ENCODE measurements at regions of chr7 and their contacts with region 1.

Region 1: GRCh38 chr7:70829221-70830059 is 302.5 kb upstream of the GALNT17 start:
- DNase-seq: peak; percentile 81
- H3K4me3 ChIP-seq: no peak overlapping the region; a peak in 1 of 4 replicates
- H3K27ac ChIP-seq: no peak overlapping the region
- H3K4me1 ChIP-seq: no peaks in the 10 kb centered on the region; a peak in 1 of 4 replicates
- H3K27me3 ChIP-seq: no peaks in the 10 kb centered on the region
- CTCF ChIP-seq: peak; percentile 88
- EP300 ChIP-seq: no peak
- RAD21 ChIP-seq: peak; percentile 83

Region 2: GRCh38 chr7:70654979-70655378 is 174.5 kb before region 1 on chr7:
- CTCF ChIA-PET with region 1: no interaction called
- POLR2A ChIA-PET with region 1: no interaction called
- DNase-seq: no peak
- H3K4me3 ChIP-seq: no peak overlapping the region
- H3K27ac ChIP-seq: no peak overlapping the region
- H3K4me1 ChIP-seq: peaks cover 0 to 6% of the 10 kb centered on the region in 2 experiments; a peak in 1 of 4 replicates
- H3K27me3 ChIP-seq: no peaks in the 10 kb centered on the region
- CTCF ChIP-seq: no peak
- EP300 ChIP-seq: no peak
- RAD21 ChIP-seq: no peak

Region 3: DNA sequence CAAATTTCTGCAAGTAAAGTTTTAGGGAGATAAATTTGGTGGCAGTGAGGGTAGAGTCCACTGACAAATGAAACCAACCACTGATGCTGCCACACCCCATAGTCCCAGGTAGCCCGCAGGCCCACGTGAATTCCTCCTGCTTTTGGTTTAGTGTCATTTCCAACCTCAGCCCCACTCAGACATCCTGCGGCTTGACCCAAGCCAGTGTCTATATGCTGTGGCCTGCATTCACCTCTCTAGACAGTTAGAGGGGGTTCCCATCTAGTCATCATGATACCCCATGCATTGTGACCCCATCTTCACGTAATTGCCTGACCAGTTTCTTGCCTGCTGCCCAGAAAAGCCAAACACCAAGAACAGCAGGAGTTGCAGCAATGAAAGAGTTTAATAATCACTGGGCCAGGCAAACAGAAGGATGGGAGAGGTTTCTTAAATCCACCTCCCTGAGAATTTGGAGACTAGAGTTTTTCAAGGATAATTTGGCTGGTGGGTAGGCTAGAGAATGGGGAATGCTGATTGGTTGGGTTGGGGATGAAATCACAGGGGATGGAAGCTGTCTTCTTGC is 29.5 kb before region 1 on chr7:
- CTCF ChIA-PET with region 1: interaction called, 12 read pairs
- POLR2A ChIA-PET with region 1: no interaction called
- DNase-seq: peak; percentile 2
- H3K4me3 ChIP-seq: no peak overlapping the region
- H3K27ac ChIP-seq: no peak overlapping the region
- H3K4me1 ChIP-seq: peaks cover 0 to 14% of the 10 kb centered on the region in 2 experiments; a peak in 1 of 4 replicates
- H3K27me3 ChIP-seq: no peaks in the 10 kb centered on the region
- CTCF ChIP-seq: no peak
- EP300 ChIP-seq: no peak
- RAD21 ChIP-seq: no peak

Region 4: DNA sequence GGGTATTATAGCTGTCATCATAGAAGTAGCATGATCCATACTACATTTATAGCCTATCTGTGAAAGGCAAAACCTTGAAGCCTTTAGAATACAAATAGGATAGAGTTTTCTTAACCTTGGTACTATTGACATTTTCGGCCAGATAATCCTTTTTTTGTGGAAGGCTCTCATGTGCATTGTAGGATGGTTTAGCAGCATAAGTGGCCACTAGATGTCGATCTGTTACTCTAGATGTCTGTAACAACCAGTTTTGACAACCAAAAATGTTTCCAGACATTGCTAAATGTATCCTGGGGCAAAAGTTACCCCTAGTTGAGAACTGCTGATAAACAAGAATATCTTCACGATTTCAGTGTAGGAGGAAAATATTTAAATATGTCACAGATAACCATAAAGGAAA is 16.9 kb before region 1 on chr7:
- CTCF ChIA-PET with region 1: interaction called, 20 read pairs
- POLR2A ChIA-PET with region 1: no interaction called
- DNase-seq: no peak
- H3K4me3 ChIP-seq: no peak overlapping the region
- H3K27ac ChIP-seq: no peak overlapping the region
- H3K4me1 ChIP-seq: no peaks in the 10 kb centered on the region; a peak in 1 of 4 replicates
- H3K27me3 ChIP-seq: 0 out of 2 replicates have a peak, but pooled peaks cover 3% of the 10 kb centered on the region
- CTCF ChIP-seq: peak; percentile 43
- EP300 ChIP-seq: no peak
- RAD21 ChIP-seq: peak; percentile 42; the same call in 1 of the 2 replicates

Region 5: DNA sequence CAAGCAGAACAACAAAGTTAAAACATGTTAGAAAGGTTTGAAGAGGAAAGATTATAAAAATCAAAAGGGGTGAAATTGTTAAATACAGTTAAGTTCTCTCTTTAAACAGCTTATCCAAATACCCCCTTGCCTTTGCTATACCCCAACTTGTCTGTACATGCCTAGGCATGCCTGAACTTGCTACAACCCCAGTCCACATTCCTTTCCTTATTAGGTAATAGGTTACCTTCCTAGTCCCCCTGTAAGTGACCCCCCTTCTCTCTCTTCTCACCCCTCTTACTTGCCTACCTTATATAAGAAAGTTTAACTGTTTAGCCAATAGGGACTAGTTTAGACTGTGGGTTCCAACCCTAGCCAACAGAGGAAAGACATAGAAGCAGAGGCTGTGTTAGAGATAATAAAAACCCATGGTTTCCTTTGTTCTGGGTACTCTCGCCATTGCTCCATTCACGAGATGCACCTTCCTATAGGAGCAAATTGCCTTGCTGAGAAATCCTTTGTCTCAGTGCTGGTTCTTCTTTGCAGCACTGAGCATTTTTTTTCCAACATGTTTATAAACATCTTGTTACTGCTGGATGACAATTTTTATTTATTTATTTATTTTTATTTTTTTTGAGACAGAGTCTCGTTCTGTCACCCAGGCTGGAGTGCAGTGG is 20.3 kb after region 1 on chr7:
- CTCF ChIA-PET with region 1: interaction called, 17 read pairs
- POLR2A ChIA-PET with region 1: no interaction called
- DNase-seq: no peak
- H3K4me3 ChIP-seq: no peak overlapping the region
- H3K27ac ChIP-seq: no peak overlapping the region
- H3K4me1 ChIP-seq: no peaks in the 10 kb centered on the region
- H3K27me3 ChIP-seq: no peaks in the 10 kb centered on the region
- CTCF ChIP-seq: no peak
- EP300 ChIP-seq: no peak
- RAD21 ChIP-seq: no peak

Region 6: GRCh38 chr7:70856866-70857630 is 27.6 kb after region 1 on chr7:
- CTCF ChIA-PET with region 1: interaction called, 17 read pairs
- POLR2A ChIA-PET with region 1: no interaction called
- DNase-seq: peak; percentile 71
- H3K4me3 ChIP-seq: no peak overlapping the region
- H3K27ac ChIP-seq: no peak overlapping the region
- H3K4me1 ChIP-seq: no peaks in the 10 kb centered on the region
- H3K27me3 ChIP-seq: no peaks in the 10 kb centered on the region
- CTCF ChIP-seq: peak; percentile 99
- EP300 ChIP-seq: no peak
- RAD21 ChIP-seq: peak; percentile 91

Region 7: GRCh38 chr7:70881167-70881847 is 51.9 kb after region 1 on chr7:
- CTCF ChIA-PET with region 1: no interaction called
- POLR2A ChIA-PET with region 1: no interaction called
- DNase-seq: peak; percentile 25
- H3K4me3 ChIP-seq: no peak overlapping the region
- H3K27ac ChIP-seq: no peak overlapping the region
- H3K4me1 ChIP-seq: no peaks in the 10 kb centered on the region
- H3K27me3 ChIP-seq: no peaks in the 10 kb centered on the region
- CTCF ChIP-seq: no peak
- EP300 ChIP-seq: no peak
- RAD21 ChIP-seq: no peak

Region 8: GRCh38 chr7:71733107-71733870 is 903.8 kb after region 1 on chr7:
- CTCF ChIA-PET with region 1: interaction called, 48 read pairs
- POLR2A ChIA-PET with region 1: no interaction called
- DNase-seq: peak; percentile 89
- H3K4me3 ChIP-seq: peak overlapping the region in 1 of 2 experiments; percentile 27; a peak in 1 of 4 replicates
- H3K27ac ChIP-seq: no peak overlapping the region
- H3K4me1 ChIP-seq: no peaks in the 10 kb centered on the region; a peak in 1 of 4 replicates
- H3K27me3 ChIP-seq: no peaks in the 10 kb centered on the region
- CTCF ChIP-seq: peak; percentile 92
- EP300 ChIP-seq: no peak
- RAD21 ChIP-seq: peak; percentile 84

Region 9: GRCh38 chr7:71739520-71740173 is 910.2 kb after region 1 on chr7:
- CTCF ChIA-PET with region 1: interaction called, 48 read pairs
- POLR2A ChIA-PET with region 1: no interaction called
- DNase-seq: no peak
- H3K4me3 ChIP-seq: no peak overlapping the region
- H3K27ac ChIP-seq: no peak overlapping the region
- H3K4me1 ChIP-seq: no peaks in the 10 kb centered on the region
- H3K27me3 ChIP-seq: no peaks in the 10 kb centered on the region
- CTCF ChIP-seq: no peak
- EP300 ChIP-seq: no peak
- RAD21 ChIP-seq: no peak